ENCODE measurements at regions of chr9 and their contacts with region 1.

Region 1: DNA sequence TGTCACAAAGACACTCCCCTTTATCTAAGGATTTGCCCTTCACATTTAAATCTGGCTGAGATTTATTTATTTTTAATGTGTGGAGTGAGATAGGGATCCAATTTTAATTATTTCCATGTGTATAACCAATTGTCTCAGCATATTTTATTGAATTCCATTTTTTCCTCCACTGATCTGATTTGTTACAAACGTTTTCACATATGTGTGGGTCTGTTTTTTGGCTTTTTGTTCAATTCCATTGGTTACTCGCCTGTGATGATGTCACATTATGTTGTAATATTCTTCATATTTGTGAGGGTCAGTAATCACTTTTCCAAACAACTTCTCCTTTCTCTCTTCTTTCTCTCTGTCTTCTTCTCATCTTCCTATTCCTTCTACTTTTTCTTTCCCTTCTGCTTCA is 278.3 kb upstream of the RFX3 start:
- DNase-seq: peak; percentile 51
- ATAC-seq: no peak; the same call in 1 of the 2 replicates
- H3K4me3 ChIP-seq: no peak overlapping the region
- H3K27ac ChIP-seq: no peak overlapping the region
- H3K4me1 ChIP-seq: no peaks in the 10 kb centered on the region; the same call in 1 of the 2 replicates
- H3K27me3 ChIP-seq: no peaks in the 10 kb centered on the region
- CTCF ChIP-seq: no peak
- POLR2A ChIP-seq: no peak
- RAD21 ChIP-seq: no peak

Region 2: DNA sequence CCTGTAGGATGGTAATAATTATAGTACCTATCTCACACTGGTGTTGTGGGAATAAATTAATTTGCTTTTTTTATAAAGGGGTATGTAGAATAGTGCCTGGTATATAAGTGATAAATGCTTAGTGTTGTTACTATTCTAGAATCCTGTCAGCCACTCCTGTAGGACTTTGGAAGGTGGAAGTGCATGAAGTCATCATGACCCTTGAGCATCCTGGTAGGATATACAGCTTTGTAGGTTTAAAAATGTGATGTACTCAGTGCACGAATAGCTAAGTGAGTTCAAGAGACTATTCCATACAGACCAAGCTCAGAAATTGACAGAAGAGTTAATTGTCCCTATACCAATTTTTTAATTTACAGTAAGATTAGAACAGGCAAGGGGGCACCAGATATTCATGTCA is 19.5 kb before region 1 on chr9:
- CTCF ChIA-PET with region 1: no interaction called
- POLR2A ChIA-PET with region 1: no interaction called
- dilution Hi-C with region 1: no loop called
- in situ Hi-C with region 1: no loop called
- intact Hi-C with region 1: loop called (anchors 2 kb)
- DNase-seq: no peak
- ATAC-seq: no peak
- H3K4me3 ChIP-seq: no peak overlapping the region
- H3K27ac ChIP-seq: no peak overlapping the region
- H3K4me1 ChIP-seq: no peaks in the 10 kb centered on the region
- H3K27me3 ChIP-seq: peaks cover 2% of the 10 kb centered on the region; the same call in 1 of the 2 replicates
- CTCF ChIP-seq: no peak
- POLR2A ChIP-seq: no peak
- RAD21 ChIP-seq: no peak

Region 3: GRCh38 chr9:3954331-3955304 is 150.5 kb after region 1 on chr9:
- CTCF ChIA-PET with region 1: no interaction called
- POLR2A ChIA-PET with region 1: no interaction called
- dilution Hi-C with region 1: no loop called
- in situ Hi-C with region 1: no loop called
- intact Hi-C with region 1: no loop called
- DNase-seq: peak; percentile 55
- ATAC-seq: peak; percentile 61
- H3K4me3 ChIP-seq: no peak overlapping the region
- H3K27ac ChIP-seq: peak overlapping the region; percentile 92
- H3K4me1 ChIP-seq: peaks cover 16% of the 10 kb centered on the region
- H3K27me3 ChIP-seq: no peaks in the 10 kb centered on the region
- CTCF ChIP-seq: no peak
- POLR2A ChIP-seq: no peak
- RAD21 ChIP-seq: no peak